Activated CD4-positive, alpha-beta memory T cell treated with anti-CD3 and anti-CD28 coated beads for 36 hours (primary cell): ENCODE measurements at regions of chr4 and their contacts with region 1.

Region 1: GRCh38 chr4:87465739-87466366 is 43.5 kb downstream of the NUDT9 start:
- DNase-seq: no peak
- H3K4me3 Mint-ChIP-seq: no peak overlapping the region
- H3K27ac Mint-ChIP-seq: no peak overlapping the region
- H3K4me1 Mint-ChIP-seq: no peaks in the 10 kb centered on the region
- H3K27me3 Mint-ChIP-seq: no peaks in the 10 kb centered on the region

Region 2: GRCh38 chr4:87150498-87151261 is 315.2 kb before region 1 on chr4:
- CTCF ChIA-PET with region 1: interaction called, 16 read pairs
- POLR2A ChIA-PET with region 1: no interaction called
- intact Hi-C with region 1: loop called (anchors 1 kb)
- DNase-seq: no peak
- H3K4me3 Mint-ChIP-seq: no peak overlapping the region
- H3K27ac Mint-ChIP-seq: no peak overlapping the region
- H3K4me1 Mint-ChIP-seq: no peaks in the 10 kb centered on the region
- H3K27me3 Mint-ChIP-seq: no peaks in the 10 kb centered on the region

Region 3: DNA sequence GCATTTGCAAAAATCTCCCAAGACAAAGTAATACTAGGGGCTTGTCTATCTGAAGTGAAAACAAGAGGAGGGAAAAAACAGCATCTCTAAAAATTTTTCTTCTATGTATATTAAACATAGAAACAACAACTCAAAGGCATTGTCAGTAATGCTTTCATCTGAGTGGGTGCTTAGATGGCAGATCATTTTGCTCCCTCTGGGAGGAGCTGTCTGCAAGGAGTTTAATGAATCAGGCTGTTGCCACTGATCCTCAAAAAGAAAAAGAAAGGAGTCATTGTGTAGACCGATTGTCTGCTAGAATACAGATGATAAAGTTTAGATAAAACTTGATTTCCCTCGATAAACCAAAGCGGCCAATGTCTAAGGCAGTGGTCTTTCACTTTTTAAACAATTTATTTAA is 195.7 kb before region 1 on chr4:
- CTCF ChIA-PET with region 1: interaction called, 4 read pairs
- POLR2A ChIA-PET with region 1: no interaction called
- intact Hi-C with region 1: loop called (anchors 2 kb)
- DNase-seq: no peak
- H3K4me3 Mint-ChIP-seq: no peak overlapping the region
- H3K27ac Mint-ChIP-seq: no peak overlapping the region
- H3K4me1 Mint-ChIP-seq: no peaks in the 10 kb centered on the region
- H3K27me3 Mint-ChIP-seq: peaks cover 6% of the 10 kb centered on the region

Region 4: DNA sequence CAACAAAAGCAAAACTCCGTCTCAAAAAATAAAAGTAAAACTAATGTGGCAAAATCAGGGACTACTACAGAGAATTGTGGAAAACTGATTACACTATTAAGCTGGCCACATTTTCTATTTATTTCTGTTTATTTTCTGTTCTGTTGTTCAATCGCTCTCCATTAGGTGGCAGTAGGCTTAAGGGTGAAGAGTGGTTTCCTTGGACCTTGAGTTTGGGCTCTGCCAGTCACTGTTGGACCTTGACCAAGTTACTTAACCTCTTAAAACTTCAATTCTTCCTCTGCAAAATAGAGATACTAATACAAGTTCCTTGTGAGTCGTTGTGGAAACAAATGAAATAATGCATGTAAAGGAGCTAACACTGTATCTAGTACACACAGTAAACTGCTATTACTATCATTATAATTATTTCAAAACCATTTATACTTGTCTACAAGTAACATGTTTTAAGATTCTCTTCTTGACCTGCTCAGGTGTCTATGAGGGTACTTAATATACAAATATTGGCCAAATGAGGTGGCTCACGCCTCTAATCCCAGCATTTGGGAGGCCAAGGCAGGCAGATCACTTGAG is 90.0 kb before region 1 on chr4:
- CTCF ChIA-PET with region 1: interaction called, 106 read pairs
- POLR2A ChIA-PET with region 1: no interaction called
- intact Hi-C with region 1: loop called (anchors 1 kb)
- DNase-seq: no peak
- H3K4me3 Mint-ChIP-seq: no peak overlapping the region
- H3K27ac Mint-ChIP-seq: no peak overlapping the region
- H3K4me1 Mint-ChIP-seq: no peaks in the 10 kb centered on the region
- H3K27me3 Mint-ChIP-seq: no peaks in the 10 kb centered on the region

Region 5: GRCh38 chr4:87422104-87423052 is 43.5 kb before region 1 on chr4 and contains the start of gene NUDT9:
- CTCF ChIA-PET with region 1: interaction called, 3 read pairs
- POLR2A ChIA-PET with region 1: no interaction called
- intact Hi-C with region 1: loop called (anchors 2 kb)
- DNase-seq: peak; percentile 92
- H3K4me3 Mint-ChIP-seq: peak within 1 kb of the TSS; percentile 97
- H3K27ac Mint-ChIP-seq: peak within 1 kb of the TSS; percentile 92
- H3K4me1 Mint-ChIP-seq: peaks cover 26% of the 10 kb centered on the region
- H3K27me3 Mint-ChIP-seq: no peaks in the 10 kb centered on the region
- total RNA-seq, gene NUDT9: 13.1 to 13.9 TPM